WTC11 (cell line): ENCODE measurements at regions of chr15 and their contacts with region 1.

Region 1: GRCh38 chr15:72722071-72722696 is 36.2 kb downstream of the BBS4 start:
- DNase-seq: peak; percentile 82
- ATAC-seq: peak; percentile 94
- H3K4me3 Mint-ChIP-seq: no peak overlapping the region
- H3K27ac Mint-ChIP-seq: no peak overlapping the region
- H3K4me1 Mint-ChIP-seq: peaks cover 14% of the 10 kb centered on the region
- H3K27me3 Mint-ChIP-seq: no peaks in the 10 kb centered on the region
- CTCF ChIP-seq: peak; percentile 82

Region 2: GRCh38 chr15:72599855-72600464 is 122.2 kb before region 1 on chr15:
- CTCF ChIA-PET with region 1: interaction called, 17 read pairs
- POLR2A ChIA-PET with region 1: no interaction called
- DNase-seq: no peak
- ATAC-seq: peak; percentile 32
- H3K4me3 Mint-ChIP-seq: no peak overlapping the region
- H3K27ac Mint-ChIP-seq: no peak overlapping the region
- H3K4me1 Mint-ChIP-seq: peaks cover 10% of the 10 kb centered on the region
- H3K27me3 Mint-ChIP-seq: no peaks in the 10 kb centered on the region
- CTCF ChIP-seq: 0 out of 2 replicates have a peak, but pooled peaks have one; percentile 29

Region 3: GRCh38 chr15:72685925-72686794 is 36.0 kb before region 1 on chr15 and contains the starts of genes BBS4 and HIGD2B:
- CTCF ChIA-PET with region 1: interaction called, 11 read pairs
- POLR2A ChIA-PET with region 1: no interaction called
- DNase-seq: peak; percentile 89
- ATAC-seq: peak; percentile 92
- H3K4me3 Mint-ChIP-seq: peak within 1 kb of the TSS; percentile 88
- H3K27ac Mint-ChIP-seq: peak within 1 kb of the TSS; percentile 93
- H3K4me1 Mint-ChIP-seq: peaks cover 14% of the 10 kb centered on the region
- H3K27me3 Mint-ChIP-seq: no peaks in the 10 kb centered on the region
- CTCF ChIP-seq: no peak
- total RNA-seq, gene BBS4: 29.3 to 35.6 TPM (median 31.5 TPM) in 3 replicates
- total RNA-seq, gene HIGD2B: 0.18 TPM in 1 of 3 replicates, not detected in the others

Region 4: DNA sequence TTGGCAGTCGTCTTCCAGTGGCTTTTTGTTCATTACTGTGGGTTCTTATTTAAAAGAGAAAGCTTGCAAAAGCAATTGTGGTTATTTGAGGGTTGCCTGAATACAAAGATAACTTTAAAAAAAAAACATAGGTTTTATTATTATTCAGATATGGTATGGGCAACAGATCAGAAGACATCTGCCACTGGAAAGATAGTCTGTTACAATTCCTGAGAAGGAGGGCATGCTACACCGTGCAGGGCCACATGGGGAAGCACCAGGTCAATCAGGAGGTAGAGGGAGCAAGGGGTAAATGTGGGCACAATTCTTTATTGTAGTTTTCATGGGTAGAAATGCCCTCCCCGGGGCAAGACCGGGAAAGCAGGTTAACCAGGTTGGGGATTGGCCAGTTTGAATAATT is 10.3 kb after region 1 on chr15:
- CTCF ChIA-PET with region 1: interaction called, 17 read pairs
- POLR2A ChIA-PET with region 1: no interaction called
- DNase-seq: no peak
- ATAC-seq: peak; percentile 71
- H3K4me3 Mint-ChIP-seq: no peak overlapping the region
- H3K27ac Mint-ChIP-seq: peak overlapping the region; percentile 30; the same call in 1 of the 2 replicates
- H3K4me1 Mint-ChIP-seq: 0 out of 2 replicates have a peak, but pooled peaks cover 4% of the 10 kb centered on the region
- H3K27me3 Mint-ChIP-seq: no peaks in the 10 kb centered on the region
- CTCF ChIP-seq: no peak

Region 5: DNA sequence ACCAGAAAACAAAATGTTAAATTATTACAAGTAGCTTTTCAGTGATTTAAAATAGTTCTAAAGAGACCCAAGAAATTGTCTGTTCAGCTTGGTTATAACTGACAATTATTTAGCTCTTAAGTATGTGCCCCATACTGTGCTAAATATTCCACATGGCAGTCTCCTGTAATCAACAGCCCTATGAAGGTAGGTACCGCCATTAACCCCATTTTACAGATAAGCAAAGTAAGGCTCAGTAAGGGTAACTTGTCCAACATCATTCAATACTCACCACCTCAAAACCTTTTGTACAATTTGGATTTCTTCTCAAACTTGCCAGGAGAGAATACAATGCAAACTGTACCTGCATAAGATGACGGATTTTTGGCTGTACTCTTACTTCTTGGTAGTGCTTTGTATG is 27.5 kb after region 1 on chr15:
- CTCF ChIA-PET with region 1: interaction called, 15 read pairs
- POLR2A ChIA-PET with region 1: no interaction called
- DNase-seq: no peak
- ATAC-seq: no peak
- H3K4me3 Mint-ChIP-seq: no peak overlapping the region
- H3K27ac Mint-ChIP-seq: no peak overlapping the region
- H3K4me1 Mint-ChIP-seq: no peaks in the 10 kb centered on the region
- H3K27me3 Mint-ChIP-seq: no peaks in the 10 kb centered on the region
- CTCF ChIP-seq: no peak

Region 6: GRCh38 chr15:72907733-72908132 is 185.5 kb after region 1 on chr15:
- CTCF ChIA-PET with region 1: no interaction called
- POLR2A ChIA-PET with region 1: no interaction called
- DNase-seq: no peak
- ATAC-seq: no peak
- H3K4me3 Mint-ChIP-seq: no peak overlapping the region
- H3K27ac Mint-ChIP-seq: no peak overlapping the region
- H3K4me1 Mint-ChIP-seq: no peaks in the 10 kb centered on the region
- H3K27me3 Mint-ChIP-seq: no peaks in the 10 kb centered on the region
- CTCF ChIP-seq: no peak

Region 7: DNA sequence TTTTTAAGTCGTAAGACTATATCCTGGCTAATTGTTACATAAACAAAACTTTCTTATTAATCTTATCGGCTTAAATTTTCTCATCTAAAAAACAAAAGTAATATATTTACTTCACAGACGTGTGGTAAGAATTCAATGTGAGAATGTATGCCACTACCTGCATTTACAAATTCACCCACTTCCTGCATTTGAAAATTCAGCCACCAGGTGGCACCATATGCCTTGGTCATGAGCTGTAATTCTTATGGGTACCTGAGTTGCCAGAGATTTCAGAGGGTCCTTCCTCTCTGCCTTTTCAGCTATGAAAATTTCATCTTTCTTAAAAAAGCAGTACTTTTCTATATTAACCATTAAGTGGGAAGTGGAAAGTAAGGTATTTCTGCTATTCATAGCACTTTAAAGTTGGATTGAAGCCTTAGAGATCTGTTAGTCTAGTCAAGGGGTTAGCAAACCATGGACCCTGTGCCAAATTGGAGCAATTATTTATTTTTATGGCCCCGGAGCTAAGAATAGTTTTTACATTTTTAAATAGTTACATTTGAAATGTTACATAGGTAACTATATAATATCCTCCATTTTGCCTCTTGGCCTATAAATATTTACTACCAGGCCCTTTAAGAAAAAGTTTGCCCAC is 518.8 kb after region 1 on chr15:
- CTCF ChIA-PET with region 1: interaction called, 11 read pairs
- POLR2A ChIA-PET with region 1: no interaction called
- DNase-seq: peak; percentile 78
- ATAC-seq: 0 out of 2 replicates have a peak, but pooled peaks have one; percentile 28
- H3K4me3 Mint-ChIP-seq: no peak overlapping the region
- H3K27ac Mint-ChIP-seq: no peak overlapping the region
- H3K4me1 Mint-ChIP-seq: no peaks in the 10 kb centered on the region
- H3K27me3 Mint-ChIP-seq: no peaks in the 10 kb centered on the region
- CTCF ChIP-seq: peak; percentile 69

Region 8: GRCh38 chr15:73265536-73266153 is 543.5 kb after region 1 on chr15:
- CTCF ChIA-PET with region 1: interaction called, 10 read pairs
- POLR2A ChIA-PET with region 1: no interaction called
- DNase-seq: peak; percentile 75
- ATAC-seq: peak; percentile 92
- H3K4me3 Mint-ChIP-seq: no peak overlapping the region
- H3K27ac Mint-ChIP-seq: no peak overlapping the region; the same call in 1 of the 2 replicates
- H3K4me1 Mint-ChIP-seq: peaks cover 5% of the 10 kb centered on the region; the same call in 1 of the 2 replicates
- H3K27me3 Mint-ChIP-seq: no peaks in the 10 kb centered on the region
- CTCF ChIP-seq: peak; percentile 62